Activated CD4-positive, alpha-beta T cell treated with anti-CD3 and anti-CD28 coated beads, Interleukin-2, amount 10 ng/mL, durations not matched to agents 24 days and 14 days (primary cell): ENCODE measurements at regions of chr4 and their contacts with region 1.

Region 1: DNA sequence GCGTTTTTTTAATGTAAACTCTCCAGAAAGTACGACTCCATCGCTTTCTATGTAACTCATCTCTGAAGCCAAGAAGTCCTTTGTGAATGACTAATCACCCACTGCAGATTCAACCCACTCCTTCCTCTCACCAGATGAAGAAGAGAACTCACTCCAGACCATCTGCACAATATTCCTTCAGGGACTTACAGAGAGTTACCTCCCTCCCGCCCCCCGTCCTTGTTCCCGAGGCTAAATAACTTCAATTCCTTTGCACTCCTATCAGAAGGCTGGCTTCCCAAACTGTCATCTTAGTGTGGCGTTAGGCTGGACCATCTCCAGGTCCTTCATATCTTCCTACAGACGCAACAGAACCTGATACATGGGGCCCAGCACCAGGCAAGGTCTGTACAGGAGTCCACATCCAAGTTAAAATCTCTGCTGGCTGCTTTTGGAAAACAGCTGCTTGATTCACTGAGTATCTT is 82.4 kb downstream of the AFAP1 start:
- DNase-seq: no peak
- H3K4me3 Mint-ChIP-seq: peak overlapping the region; percentile 67
- H3K27ac Mint-ChIP-seq: peak overlapping the region; percentile 85
- H3K4me1 Mint-ChIP-seq: peaks cover 50% of the 10 kb centered on the region
- H3K27me3 Mint-ChIP-seq: no peaks in the 10 kb centered on the region

Region 2: DNA sequence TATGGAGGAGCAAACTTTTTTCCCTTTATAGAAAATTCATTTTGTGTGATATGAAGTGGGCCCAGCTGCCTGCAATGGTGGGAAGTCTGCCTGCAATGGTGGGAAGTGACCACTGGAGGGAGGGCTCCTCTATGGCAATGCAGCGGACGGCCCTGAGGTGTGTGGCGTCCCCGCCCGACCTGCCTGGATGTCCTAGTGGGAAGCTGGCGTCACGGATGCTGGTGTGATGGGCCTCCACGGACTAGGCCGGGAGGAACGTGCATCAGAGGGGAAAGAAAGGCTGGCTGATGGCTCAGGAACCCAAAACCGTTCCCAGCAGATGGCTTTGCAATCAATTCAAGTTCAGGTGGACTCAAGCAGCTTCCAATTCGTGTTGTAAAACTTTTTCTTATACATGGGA is 95.5 kb before region 1 on chr4:
- intact Hi-C with region 1: loop called (anchors 1 kb)
- DNase-seq: peak; percentile 83
- H3K4me3 Mint-ChIP-seq: no peak overlapping the region
- H3K27ac Mint-ChIP-seq: no peak overlapping the region
- H3K4me1 Mint-ChIP-seq: peaks cover 30% of the 10 kb centered on the region
- H3K27me3 Mint-ChIP-seq: no peaks in the 10 kb centered on the region

Region 3: GRCh38 chr4:7843831-7844593 is 13.3 kb before region 1 on chr4:
- intact Hi-C with region 1: loop called (anchors 1 kb)
- DNase-seq: peak; percentile 90
- H3K4me3 Mint-ChIP-seq: no peak overlapping the region
- H3K27ac Mint-ChIP-seq: no peak overlapping the region
- H3K4me1 Mint-ChIP-seq: peaks cover 17% of the 10 kb centered on the region
- H3K27me3 Mint-ChIP-seq: no peaks in the 10 kb centered on the region

Region 4: GRCh38 chr4:7867701-7868435 is 10.6 kb after region 1 on chr4:
- intact Hi-C with region 1: loop called (anchors 1 kb)
- DNase-seq: no peak
- H3K4me3 Mint-ChIP-seq: peak overlapping the region; percentile 24
- H3K27ac Mint-ChIP-seq: peak overlapping the region; percentile 77
- H3K4me1 Mint-ChIP-seq: peaks cover 27% of the 10 kb centered on the region
- H3K27me3 Mint-ChIP-seq: no peaks in the 10 kb centered on the region

Region 5: DNA sequence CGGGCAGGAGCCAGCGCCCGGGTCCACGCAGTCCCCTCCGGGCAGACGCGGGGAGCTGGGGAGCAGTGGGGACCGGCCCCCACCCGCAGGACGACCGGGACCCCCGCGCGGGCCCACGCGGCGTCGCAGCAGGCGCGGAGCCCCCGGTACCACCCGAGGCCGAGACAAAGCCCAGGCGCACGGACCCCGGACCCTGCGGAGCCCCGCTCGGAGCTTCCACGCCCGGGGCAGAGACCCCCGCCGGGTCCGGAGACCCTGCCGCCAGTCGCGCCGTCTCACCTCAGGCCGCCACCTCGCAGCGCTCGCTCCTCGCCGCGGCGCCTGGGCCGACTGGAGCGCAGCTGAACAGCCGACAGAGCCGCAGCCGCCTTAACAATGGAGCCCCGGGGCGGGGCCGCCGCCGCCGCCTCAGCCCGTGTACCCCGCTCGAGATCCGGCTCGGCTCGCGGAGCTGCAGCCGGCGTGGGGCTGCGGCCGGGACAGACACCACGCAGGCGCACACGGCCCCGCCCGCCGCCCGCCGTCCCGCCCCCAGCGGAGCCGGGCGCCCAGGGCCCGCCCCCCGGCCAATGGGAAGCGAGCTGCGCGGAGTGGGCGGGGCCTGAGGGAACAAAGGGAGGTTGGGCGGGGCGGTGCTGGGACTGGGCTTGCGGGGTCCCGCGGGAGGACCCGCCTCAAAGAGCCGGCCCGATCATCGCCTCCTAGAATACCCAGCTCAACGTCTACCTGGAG is 82.3 kb after region 1 on chr4 and contains the start of gene AFAP1:
- intact Hi-C with region 1: loop called (anchors 5 kb)
- DNase-seq: peak; percentile 97
- H3K4me3 Mint-ChIP-seq: peak within 1 kb of the TSS; percentile 66
- H3K27ac Mint-ChIP-seq: no peak within 1 kb of the TSS
- H3K4me1 Mint-ChIP-seq: peaks cover 25% of the 10 kb centered on the region
- H3K27me3 Mint-ChIP-seq: peaks cover 16% of the 10 kb centered on the region
- total RNA-seq, gene AFAP1: 37.6 and 40.8 TPM in 2 replicates

Region 6: GRCh38 chr4:7960790-7961655 is 103.8 kb after region 1 on chr4:
- intact Hi-C with region 1: loop called (anchors 1 kb)
- DNase-seq: peak; percentile 91
- H3K4me3 Mint-ChIP-seq: peak overlapping the region; percentile 63
- H3K27ac Mint-ChIP-seq: peak overlapping the region; percentile 97
- H3K4me1 Mint-ChIP-seq: peaks cover 56% of the 10 kb centered on the region
- H3K27me3 Mint-ChIP-seq: peaks cover 5% of the 10 kb centered on the region